ENCODE measurements at regions of chr15 and their contacts with region 1.

Region 1: DNA sequence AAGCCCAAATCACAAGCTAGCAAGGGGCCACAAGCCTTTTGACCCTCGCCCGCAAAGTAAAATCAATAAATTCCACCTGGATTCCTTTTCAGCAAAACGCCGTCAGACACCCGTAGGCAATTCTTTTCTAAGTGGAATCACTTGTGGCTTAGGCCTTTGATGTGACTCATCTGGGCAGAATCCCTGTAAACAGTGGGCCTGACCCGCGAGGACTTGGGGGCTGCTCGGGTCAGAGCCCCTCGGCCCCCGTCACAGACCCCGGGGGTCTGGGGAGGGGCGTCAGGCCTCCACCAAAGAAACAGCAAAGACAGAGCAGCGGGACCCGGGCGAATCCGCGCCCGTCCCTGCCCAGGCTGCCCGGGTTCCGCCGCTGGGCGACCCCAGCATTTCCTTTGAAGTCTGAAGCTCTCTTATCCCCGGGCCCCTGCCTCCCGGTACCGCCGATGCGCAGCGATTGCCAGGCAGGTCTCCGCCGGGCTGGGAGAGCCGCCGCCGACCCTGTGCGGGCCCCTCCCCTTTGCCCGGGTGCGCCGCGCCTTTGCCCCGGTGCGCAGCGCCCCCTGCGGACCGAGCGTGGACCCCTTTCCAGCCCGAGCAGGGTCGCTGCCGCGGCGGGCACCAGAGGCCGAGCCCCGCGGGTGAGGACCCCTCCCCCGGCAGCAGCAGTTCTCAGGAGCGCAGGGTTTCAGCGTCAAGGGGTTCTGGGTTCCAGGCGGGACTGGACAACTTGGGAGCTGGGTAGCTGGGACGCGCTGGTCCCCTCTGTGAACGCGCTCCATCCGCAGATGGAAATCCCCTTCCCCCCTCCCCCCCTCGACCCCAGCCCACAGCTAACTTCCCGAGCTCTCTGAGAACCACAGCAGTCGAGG is 178.3 kb downstream of the UACA start:
- DNase-seq: peak; percentile 84 to 93
- H3K4me3 ChIP-seq: peak overlapping the region; percentile 38
- H3K4me3 Mint-ChIP-seq: peak overlapping the region; percentile 74
- H3K27ac Mint-ChIP-seq: peak overlapping the region; percentile 92
- H3K4me1 ChIP-seq: peaks cover 17% of the 10 kb centered on the region
- H3K4me1 Mint-ChIP-seq: peaks cover 12% of the 10 kb centered on the region
- H3K27me3 ChIP-seq: no peaks in the 10 kb centered on the region
- H3K27me3 Mint-ChIP-seq: no peaks in the 10 kb centered on the region
- CTCF ChIP-seq: peak; percentile 53 to 76

Region 2: DNA sequence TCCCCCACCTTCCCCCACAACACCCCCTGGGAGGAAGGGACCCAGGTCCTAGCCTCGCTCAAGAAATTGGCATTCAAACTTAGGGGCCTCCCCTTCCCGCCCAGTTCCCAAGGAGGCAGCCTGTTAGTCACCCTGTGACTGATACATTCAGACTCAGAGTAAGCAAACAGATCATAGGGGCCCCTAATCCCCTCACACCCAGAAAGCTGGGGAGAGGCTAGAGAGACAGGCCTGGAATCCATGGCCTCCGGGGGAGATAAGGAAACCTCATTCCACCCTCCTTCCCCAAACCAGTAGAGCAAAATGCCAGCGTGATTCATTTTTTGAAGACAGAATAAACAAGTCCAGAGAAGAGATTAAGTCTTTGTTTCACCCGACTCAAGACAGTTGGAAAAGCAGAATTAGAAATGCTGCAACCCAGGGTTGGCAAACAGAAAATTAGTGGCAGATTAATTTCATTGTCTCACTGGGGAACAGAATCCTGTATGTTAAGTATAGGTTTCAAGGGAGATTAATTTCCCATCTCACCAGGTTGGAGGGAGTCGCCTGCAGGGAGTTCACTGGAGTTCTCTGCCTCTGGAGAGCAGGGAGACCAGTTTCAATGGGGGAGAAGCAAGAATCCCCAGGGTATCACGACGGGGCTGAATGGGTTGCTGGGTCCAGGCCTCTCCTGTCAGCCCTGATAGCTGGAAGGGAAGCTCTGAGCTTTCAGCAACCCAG is 90.1 kb before region 1 on chr15:
- CTCF ChIA-PET with region 1: no interaction called
- POLR2A ChIA-PET with region 1: interaction called, 3 read pairs
- intact Hi-C with region 1: loop called (anchors 1 kb)
- DNase-seq: peak; percentile 94 to 97
- H3K4me3 ChIP-seq: peak overlapping the region; percentile 17; the same call in 1 of the 2 replicates
- H3K4me3 Mint-ChIP-seq: peak overlapping the region; percentile 68
- H3K27ac Mint-ChIP-seq: peak overlapping the region; percentile 98
- H3K4me1 ChIP-seq: peaks cover 41% of the 10 kb centered on the region
- H3K4me1 Mint-ChIP-seq: peaks cover 56% of the 10 kb centered on the region
- H3K27me3 ChIP-seq: no peaks in the 10 kb centered on the region
- H3K27me3 Mint-ChIP-seq: no peaks in the 10 kb centered on the region
- CTCF ChIP-seq: no peak

Region 3: GRCh38 chr15:70569091-70569621 is 15.9 kb before region 1 on chr15:
- CTCF ChIA-PET with region 1: interaction called, 12 read pairs
- POLR2A ChIA-PET with region 1: no interaction called
- intact Hi-C with region 1: loop called (anchors 1 kb)
- DNase-seq: peak; percentile 55 to 63
- H3K4me3 ChIP-seq: no peak overlapping the region
- H3K4me3 Mint-ChIP-seq: no peak overlapping the region
- H3K27ac Mint-ChIP-seq: peak overlapping the region; percentile 82
- H3K4me1 ChIP-seq: peaks cover 13% of the 10 kb centered on the region
- H3K4me1 Mint-ChIP-seq: peaks cover 13% of the 10 kb centered on the region
- H3K27me3 ChIP-seq: no peaks in the 10 kb centered on the region
- H3K27me3 Mint-ChIP-seq: no peaks in the 10 kb centered on the region
- CTCF ChIP-seq: peak; percentile 37 to 75

Region 4: DNA sequence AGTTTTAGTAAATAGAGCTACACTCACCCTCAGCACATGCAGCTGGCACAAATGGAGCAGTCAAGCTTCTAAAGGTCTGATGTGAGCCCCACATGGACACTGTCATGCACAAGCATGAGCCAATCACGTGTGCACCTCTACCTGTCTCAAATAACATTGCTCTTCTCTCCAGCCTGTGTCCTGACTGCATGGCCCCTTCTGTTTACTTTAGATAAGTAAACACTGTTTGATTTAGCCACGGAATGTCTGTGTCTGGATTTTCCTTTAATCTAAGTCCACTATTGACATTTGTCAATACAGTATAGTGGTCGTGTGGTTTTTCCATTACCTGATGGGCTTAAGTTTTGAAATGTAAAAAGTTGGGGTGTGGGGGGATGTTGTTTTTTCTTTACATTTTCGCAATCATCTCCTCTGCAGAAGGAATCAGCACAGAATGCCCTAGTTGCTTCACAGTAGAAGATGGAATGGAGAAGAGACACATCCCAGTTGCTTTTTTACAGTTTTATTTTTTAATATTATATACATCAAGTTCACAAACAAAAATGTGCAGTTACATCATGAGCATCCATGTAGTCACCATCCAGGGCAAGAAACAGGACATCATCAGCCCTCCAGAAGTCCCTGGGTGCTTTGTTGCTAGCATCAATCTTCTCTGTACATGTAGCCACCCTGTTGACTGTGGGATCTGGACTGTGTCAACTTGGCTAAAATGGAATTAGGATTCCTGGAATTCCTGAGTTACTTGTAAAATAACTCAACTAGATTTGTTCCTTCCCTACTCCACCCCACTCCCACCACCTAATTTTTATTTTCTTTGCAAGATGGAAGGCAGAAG is 32.2 kb after region 1 on chr15:
- CTCF ChIA-PET with region 1: interaction called, 4 read pairs
- POLR2A ChIA-PET with region 1: no interaction called
- intact Hi-C with region 1: loop called (anchors 1 kb)
- DNase-seq: peak; percentile 75 to 81
- H3K4me3 ChIP-seq: no peak overlapping the region
- H3K4me3 Mint-ChIP-seq: peak overlapping the region; percentile 65
- H3K27ac Mint-ChIP-seq: peak overlapping the region; percentile 91
- H3K4me1 ChIP-seq: peaks cover 27% of the 10 kb centered on the region
- H3K4me1 Mint-ChIP-seq: peaks cover 25% of the 10 kb centered on the region
- H3K27me3 ChIP-seq: no peaks in the 10 kb centered on the region
- H3K27me3 Mint-ChIP-seq: no peaks in the 10 kb centered on the region
- CTCF ChIP-seq: no peak

Region 5: GRCh38 chr15:71397377-71397776 is 812.3 kb after region 1 on chr15:
- CTCF ChIA-PET with region 1: no interaction called
- POLR2A ChIA-PET with region 1: no interaction called
- intact Hi-C with region 1: no loop called
- DNase-seq: no peak
- H3K4me3 ChIP-seq: no peak overlapping the region
- H3K4me3 Mint-ChIP-seq: no peak overlapping the region
- H3K27ac Mint-ChIP-seq: no peak overlapping the region
- H3K4me1 ChIP-seq: no peaks in the 10 kb centered on the region
- H3K4me1 Mint-ChIP-seq: no peaks in the 10 kb centered on the region
- H3K27me3 ChIP-seq: no peaks in the 10 kb centered on the region
- H3K27me3 Mint-ChIP-seq: peaks cover 16% of the 10 kb centered on the region
- CTCF ChIP-seq: no peak

Measured in Caco-2 (cell line).